Right lobe of liver (tissue), 6 donors: ENCODE measurements at regions of chr16 and their contacts with region 1.

Region 1: GRCh38 chr16:70529051-70529777 is 5.6 kb downstream of the SF3B3 start:
- DNase-seq: no peak
- ATAC-seq: peak in 3 of 4 donors; percentile 30 to 56 (median 30)
- H3K4me3 ChIP-seq: no peak overlapping the region
- H3K27ac ChIP-seq: no peak overlapping the region
- H3K4me1 ChIP-seq: peaks cover 0 to 30% (median 0%) of the 10 kb centered on the region in 4 donors
- H3K27me3 ChIP-seq: no peaks in the 10 kb centered on the region
- CTCF ChIP-seq: peak; percentile 38 to 53 (median 47)
- POLR2A ChIP-seq: no peak

Region 2: GRCh38 chr16:70391881-70392481 is 137.2 kb before region 1 on chr16:
- intact Hi-C with region 1: no loop called
- DNase-seq: no peak
- ATAC-seq: no peak
- H3K4me3 ChIP-seq: no peak overlapping the region
- H3K27ac ChIP-seq: no peak overlapping the region
- H3K4me1 ChIP-seq: no peaks in the 10 kb centered on the region
- H3K27me3 ChIP-seq: no peaks in the 10 kb centered on the region
- CTCF ChIP-seq: no peak
- POLR2A ChIP-seq: no peak

Region 3: GRCh38 chr16:70653809-70654771 is 124.9 kb after region 1 on chr16:
- intact Hi-C with region 1: loop called in 1 of 2 experiments (anchors 5 kb)
- DNase-seq: peak in 1 of 3 donors; percentile 80
- ATAC-seq: peak; percentile 88 to 96 (median 90)
- H3K4me3 ChIP-seq: peak overlapping the region in 1 of 3 donors; percentile 23
- H3K27ac ChIP-seq: no peak overlapping the region
- H3K4me1 ChIP-seq: peaks cover 0 to 4% (median under 1%) of the 10 kb centered on the region in 4 donors
- H3K27me3 ChIP-seq: no peaks in the 10 kb centered on the region
- CTCF ChIP-seq: peak; percentile 83 to 96 (median 90)
- POLR2A ChIP-seq: no peak